ENCODE measurements at regions of chr4 and their contacts with region 1.

Region 1: DNA sequence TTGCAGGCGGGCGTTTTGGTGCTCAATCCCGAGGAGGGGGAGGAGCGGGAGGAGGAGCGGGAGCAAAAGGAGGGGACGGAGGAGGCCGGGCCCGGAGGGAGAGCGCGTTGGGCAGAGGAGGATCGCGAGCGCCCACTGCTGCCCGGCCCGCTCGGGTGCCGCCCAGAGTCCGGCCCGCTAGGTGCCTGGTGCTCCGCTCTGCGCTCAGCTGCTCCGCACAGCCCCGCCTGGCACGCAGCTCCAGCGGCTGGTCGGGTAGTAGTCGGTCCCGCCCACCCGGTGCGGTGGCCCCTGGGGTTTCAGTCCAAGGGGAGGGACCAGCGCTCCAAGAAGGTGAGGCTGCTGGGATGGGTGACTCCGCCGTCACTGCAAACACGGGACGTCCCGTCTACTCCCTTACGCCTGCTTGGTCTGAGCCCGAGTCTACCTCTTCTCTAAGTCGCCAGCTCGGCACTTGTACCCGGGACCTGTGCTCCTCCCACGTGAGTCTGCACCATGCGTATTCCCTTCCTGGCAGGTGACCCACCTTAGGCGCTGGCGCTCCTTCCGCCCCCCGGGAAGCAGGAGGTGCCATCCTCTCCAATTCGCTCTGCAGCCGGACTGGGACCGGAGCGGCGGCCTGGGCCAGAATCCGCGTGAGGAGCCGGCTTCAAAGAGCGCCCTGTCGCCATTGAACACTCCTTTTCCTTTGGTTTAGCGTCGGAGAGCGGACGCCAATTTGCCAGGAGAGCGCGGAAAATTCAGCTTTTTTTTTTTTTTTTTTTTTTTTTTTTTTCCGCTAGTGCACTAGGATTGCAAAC is 405 bp upstream of the HS3ST1 start:
- DNase-seq: peak; percentile 82 to 84
- H3K4me3 ChIP-seq: peak overlapping the region; percentile 53 to 55
- H3K27ac ChIP-seq: no peak overlapping the region
- H3K4me1 ChIP-seq: peaks cover 7 to 33% (median 22%) of the 10 kb centered on the region in 4 donors
- H3K27me3 ChIP-seq: no peaks in the 10 kb centered on the region
- CTCF ChIP-seq: peak; percentile 61 to 66

Region 2: GRCh38 chr4:10582059-10582686 is 846.9 kb before region 1 on chr4:
- intact Hi-C with region 1: loop called (anchors 10 kb)
- DNase-seq: peak in 1 of 2 donors; percentile 47
- H3K4me3 ChIP-seq: no peak overlapping the region
- H3K27ac ChIP-seq: no peak overlapping the region
- H3K4me1 ChIP-seq: peaks cover 0 to 9% (median 2%) of the 10 kb centered on the region in 4 donors
- H3K27me3 ChIP-seq: peaks cover 0 to 9% of the 10 kb centered on the region in 2 donors
- CTCF ChIP-seq: peak; percentile 76 to 85